T-cell (primary cell): ENCODE measurements at regions of chr18 and their contacts with region 1.

Region 1: GRCh38 chr18:21612125-21612991 is at the start of gene SNRPD1:
- DNase-seq: peak; percentile 66 to 93 (median 82)
- ATAC-seq: peak; percentile 98 to 100 (median 99)
- H3K4me3 ChIP-seq: peak within 1 kb of the TSS; percentile 75 to 93
- H3K4me3 Mint-ChIP-seq: peak within 1 kb of the TSS; percentile 98 to 99 (median 98)
- H3K27ac ChIP-seq: peak within 1 kb of the TSS; percentile 81
- H3K27ac Mint-ChIP-seq: peak within 1 kb of the TSS; percentile 97 to 99
- H3K4me1 ChIP-seq: peaks cover 11 to 26% of the 10 kb centered on the region in 2 experiments
- H3K4me1 Mint-ChIP-seq: peaks cover 47 to 54% (median 49%) of the 10 kb centered on the region in 3 donors
- H3K27me3 ChIP-seq: no peaks in the 10 kb centered on the region
- H3K27me3 Mint-ChIP-seq: no peaks in the 10 kb centered on the region
- total RNA-seq, gene SNRPD1: 18.7 to 31.2 (median 30.7) TPM

Region 2: DNA sequence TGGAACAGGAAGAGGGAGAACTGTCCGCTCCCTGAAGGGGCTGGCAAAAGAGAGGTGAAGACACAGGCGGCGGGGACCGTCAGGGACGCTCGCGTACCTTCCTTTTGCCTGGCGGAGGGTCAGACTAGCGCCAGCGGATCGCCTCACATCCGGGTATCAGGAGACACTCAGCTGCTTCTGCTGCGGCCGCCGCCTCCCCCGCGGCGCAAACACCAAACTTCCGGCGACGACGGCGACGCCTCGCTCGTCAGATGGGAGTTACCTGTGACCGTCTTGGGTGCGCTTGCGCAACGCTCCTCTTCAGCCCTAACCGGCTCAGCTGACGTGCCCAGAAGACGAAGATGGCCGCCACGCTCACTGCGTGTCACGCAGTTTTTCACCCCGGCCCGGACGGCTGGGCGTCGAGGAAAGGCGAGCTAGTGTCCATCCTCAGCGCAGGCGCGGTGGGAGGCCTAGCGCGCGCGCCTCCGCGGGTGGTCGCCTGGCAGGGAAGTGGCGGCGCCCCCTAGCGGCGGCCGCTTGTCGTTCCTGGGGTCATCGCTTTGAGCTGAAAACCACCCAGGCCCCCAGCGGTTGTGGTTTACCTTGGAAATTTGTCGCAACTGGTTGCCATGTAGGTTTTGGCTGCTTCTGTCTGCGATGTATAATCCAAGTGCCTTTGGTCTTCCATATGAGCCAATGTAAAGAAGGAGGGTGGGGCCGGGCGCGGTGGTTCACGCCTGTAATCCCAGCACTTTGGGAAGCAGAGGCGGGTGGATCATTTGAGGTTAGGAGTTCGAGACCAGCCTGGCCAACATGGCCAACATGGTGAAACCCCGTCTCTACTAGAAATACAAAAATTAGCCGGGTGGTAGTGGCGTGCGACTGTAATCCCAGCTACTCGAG is 11.6 kb before region 1 on chr18 and contains the start of gene ESCO1:
- CTCF ChIA-PET with region 1: interaction called, 38 to 83 read pairs
- POLR2A ChIA-PET with region 1: interaction called, 9 to 18 read pairs
- DNase-seq: peak; percentile 85 to 98 (median 93)
- ATAC-seq: peak; percentile 88 to 91 (median 88)
- H3K4me3 ChIP-seq: peak within 1 kb of the TSS; percentile 74 to 84
- H3K4me3 Mint-ChIP-seq: peak within 1 kb of the TSS; percentile 93 to 96 (median 95)
- H3K27ac ChIP-seq: peak within 1 kb of the TSS; percentile 90
- H3K27ac Mint-ChIP-seq: peak within 1 kb of the TSS; percentile 99
- H3K4me1 ChIP-seq: peaks cover 15 to 31% of the 10 kb centered on the region in 2 experiments
- H3K4me1 Mint-ChIP-seq: peaks cover 38 to 51% (median 42%) of the 10 kb centered on the region in 3 donors
- H3K27me3 ChIP-seq: no peaks in the 10 kb centered on the region
- H3K27me3 Mint-ChIP-seq: no peaks in the 10 kb centered on the region
- total RNA-seq, gene ESCO1: 24.5 to 32.6 (median 26.2) TPM

Region 3: DNA sequence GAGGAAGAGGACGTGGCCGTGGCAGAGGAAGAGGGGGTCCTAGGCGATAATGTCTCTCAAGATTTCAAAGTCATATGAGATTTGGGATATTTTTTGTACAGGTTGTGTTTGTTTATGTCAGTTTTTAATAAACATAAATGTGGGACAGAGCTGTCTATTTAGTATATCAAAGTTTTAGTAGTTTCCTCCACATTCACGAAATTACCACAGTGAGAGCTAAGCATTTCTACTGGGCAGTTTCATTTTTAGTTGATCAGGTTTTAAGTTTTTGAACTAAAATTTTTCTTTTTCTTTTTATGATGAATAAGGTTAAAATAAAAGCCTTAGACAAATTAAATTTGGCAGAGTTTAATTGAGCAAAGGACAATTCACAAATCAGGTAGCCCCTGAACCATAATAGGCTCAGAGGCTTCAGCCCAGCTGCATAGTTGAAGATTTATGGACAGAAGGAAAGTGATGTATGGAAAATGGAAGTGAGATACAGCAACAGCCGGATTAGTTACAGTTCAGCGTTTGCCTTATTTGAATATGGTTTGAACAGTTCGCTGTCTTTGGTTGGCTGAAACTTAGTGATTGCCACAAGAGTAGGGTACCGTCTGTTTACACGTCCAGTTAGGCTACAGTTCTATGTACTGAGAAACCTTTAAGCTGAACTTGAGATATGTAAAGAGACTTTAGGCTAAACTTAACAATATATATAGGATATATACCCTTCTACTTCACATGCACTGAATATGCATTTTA is 16.9 kb after region 1 on chr18:
- CTCF ChIA-PET with region 1: interaction called in 1 of 2 experiments, 3 read pairs
- POLR2A ChIA-PET with region 1: interaction called, 3 to 13 read pairs
- DNase-seq: no peak
- ATAC-seq: no peak
- H3K4me3 ChIP-seq: no peak overlapping the region
- H3K4me3 Mint-ChIP-seq: peak overlapping the region in 1 of 3 donors; percentile 3
- H3K27ac ChIP-seq: peak overlapping the region; percentile 39
- H3K27ac Mint-ChIP-seq: peak overlapping the region; percentile 68 to 79
- H3K4me1 ChIP-seq: peaks cover 3 to 6% of the 10 kb centered on the region in 2 experiments
- H3K4me1 Mint-ChIP-seq: peaks cover 18 to 22% (median 19%) of the 10 kb centered on the region in 3 donors
- H3K27me3 ChIP-seq: no peaks in the 10 kb centered on the region
- H3K27me3 Mint-ChIP-seq: no peaks in the 10 kb centered on the region